Endothelial cell of umbilical vein (primary cell): ENCODE measurements at regions of chr19 and their contacts with region 1.

Region 1: DNA sequence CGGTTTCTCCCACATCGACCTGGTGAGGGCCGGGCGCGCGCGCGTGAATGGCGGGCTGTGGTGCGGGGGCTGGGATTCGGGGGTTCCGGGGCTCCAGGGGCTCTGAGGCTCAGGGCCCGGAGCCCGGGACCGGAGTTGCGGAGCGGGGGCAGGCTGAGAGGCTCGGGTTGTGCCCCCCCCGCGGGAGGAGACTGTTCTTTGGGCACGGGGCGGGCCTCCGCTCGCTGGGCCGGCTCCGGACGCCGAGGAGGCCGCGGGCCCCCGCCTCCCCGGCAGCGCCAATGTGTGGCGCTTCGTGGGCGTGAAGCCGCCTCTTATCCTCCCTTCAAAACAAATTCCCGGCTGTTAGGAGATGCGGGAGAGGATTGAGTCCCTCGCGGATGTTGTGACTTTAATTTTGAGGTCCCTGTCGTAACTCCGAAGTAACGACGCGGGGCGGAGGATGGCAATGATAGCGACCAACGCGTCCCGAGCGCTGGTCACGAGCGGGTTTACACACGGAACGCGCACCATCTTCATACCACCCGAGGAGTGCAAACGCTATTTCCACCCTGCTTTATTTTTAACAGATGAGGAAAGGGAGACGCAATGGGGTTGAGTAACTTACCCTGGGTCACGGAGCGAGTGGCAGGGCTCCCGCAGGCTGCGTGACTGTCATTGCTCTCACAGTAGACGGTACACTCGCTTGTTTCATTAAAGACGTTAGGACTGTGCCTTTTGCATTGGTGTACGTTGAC is 536 bp downstream of the UBA2 start:
- DNase-seq: peak; percentile 41
- H3K4me3 ChIP-seq: peak overlapping the region; percentile 85 to 93 (median 86)
- H3K27ac ChIP-seq: peak overlapping the region; percentile 59
- H3K4me1 ChIP-seq: peaks cover 27% of the 10 kb centered on the region
- H3K27me3 ChIP-seq: no peaks in the 10 kb centered on the region
- CTCF ChIP-seq: no peak
- POLR2A ChIP-seq: no peak

Region 2: DNA sequence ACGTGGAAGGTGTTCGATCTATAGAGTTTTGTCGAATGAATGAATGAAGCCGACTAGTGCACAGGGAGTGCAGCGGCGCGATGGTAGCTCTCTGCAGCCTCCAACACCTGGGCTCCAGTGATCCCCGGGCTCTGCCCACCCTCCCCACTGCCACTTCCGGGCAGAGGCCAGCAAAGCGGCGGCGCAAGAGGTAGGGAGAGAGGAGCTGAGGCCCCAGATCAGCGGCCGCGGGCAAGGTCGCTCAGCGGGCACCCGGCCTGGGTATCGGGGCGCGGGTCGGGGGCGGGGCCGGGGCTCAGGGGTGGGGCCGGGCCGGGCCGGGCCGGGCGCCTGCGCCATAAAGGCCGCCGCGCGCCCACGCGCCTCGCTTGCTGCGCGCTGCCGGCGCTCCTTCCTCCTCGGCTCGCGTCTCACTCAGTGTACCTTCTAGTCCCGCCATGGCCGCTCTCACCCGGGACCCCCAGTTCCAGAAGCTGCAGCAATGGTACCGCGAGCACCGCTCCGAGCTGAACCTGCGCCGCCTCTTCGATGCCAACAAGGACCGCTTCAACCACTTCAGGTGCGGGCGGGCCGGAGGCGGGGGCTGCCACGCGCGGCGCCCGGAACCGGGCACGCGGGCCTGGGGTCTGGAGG is 63.8 kb before region 1 on chr19 and contains the start of gene GPI:
- CTCF ChIA-PET with region 1: interaction called, 3 read pairs
- POLR2A ChIA-PET with region 1: no interaction called
- dilution Hi-C with region 1: no loop called
- intact Hi-C with region 1: loop called (anchors 5 kb)
- DNase-seq: peak; percentile 28
- H3K4me3 ChIP-seq: peak within 1 kb of the TSS; percentile 71 to 93 (median 72)
- H3K27ac ChIP-seq: peak within 1 kb of the TSS; percentile 32
- H3K4me1 ChIP-seq: peaks cover 11% of the 10 kb centered on the region
- H3K27me3 ChIP-seq: no peaks in the 10 kb centered on the region
- CTCF ChIP-seq: no peak
- POLR2A ChIP-seq: peak; percentile 64
- total RNA-seq, gene GPI: 245 and 273 TPM in 2 replicates

Region 3: DNA sequence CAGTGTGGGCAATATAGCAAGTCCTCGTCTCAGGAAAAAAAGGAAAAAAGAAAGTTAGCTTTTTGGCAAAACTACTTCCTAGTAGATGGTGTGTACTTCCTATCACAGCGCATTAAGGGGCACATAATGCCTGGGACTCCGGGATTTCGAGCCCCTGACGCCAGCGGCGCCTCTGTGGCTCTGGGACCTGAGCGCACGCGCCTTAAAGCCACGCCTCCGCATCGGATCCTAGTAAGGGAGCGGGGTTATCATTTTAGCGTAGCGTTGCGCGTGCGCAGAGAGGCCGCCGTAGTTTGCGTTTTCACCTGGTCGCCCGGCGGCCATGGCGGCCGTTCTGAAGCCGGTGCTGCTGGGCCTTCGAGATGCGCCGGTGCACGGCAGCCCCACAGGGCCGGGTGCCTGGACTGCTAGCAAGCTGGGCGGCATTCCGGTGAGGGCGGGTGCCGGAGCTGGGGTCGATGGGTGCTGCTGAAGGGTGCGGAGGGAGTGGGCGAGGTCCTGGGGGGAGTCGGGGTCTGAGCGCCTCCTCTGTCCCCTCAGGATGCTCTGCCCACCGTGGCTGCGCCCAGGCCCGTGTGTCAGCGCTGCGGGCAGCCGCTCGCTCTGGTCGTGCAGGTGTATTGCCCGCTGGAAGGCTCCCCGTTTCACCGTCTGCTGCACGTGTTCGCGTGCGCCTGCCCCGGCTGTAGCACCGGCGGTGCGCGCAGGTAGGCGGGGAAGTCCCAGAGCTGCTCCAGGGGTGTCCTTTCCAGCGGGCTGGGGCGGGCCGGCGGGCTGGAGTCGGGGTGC is 24.4 kb before region 1 on chr19 and contains the start of gene PDCD2L:
- CTCF ChIA-PET with region 1: interaction called, 4 read pairs
- POLR2A ChIA-PET with region 1: no interaction called
- dilution Hi-C with region 1: no loop called
- intact Hi-C with region 1: loop called (anchors 1 kb)
- DNase-seq: peak; percentile 92
- H3K4me3 ChIP-seq: peak within 1 kb of the TSS; percentile 60 to 79 (median 75)
- H3K27ac ChIP-seq: peak within 1 kb of the TSS; percentile 69
- H3K4me1 ChIP-seq: peaks cover 7% of the 10 kb centered on the region
- H3K27me3 ChIP-seq: no peaks in the 10 kb centered on the region
- CTCF ChIP-seq: no peak
- POLR2A ChIP-seq: peak; percentile 75
- total RNA-seq, gene PDCD2L: 12.4 and 12.9 TPM in 2 replicates

Region 4: DNA sequence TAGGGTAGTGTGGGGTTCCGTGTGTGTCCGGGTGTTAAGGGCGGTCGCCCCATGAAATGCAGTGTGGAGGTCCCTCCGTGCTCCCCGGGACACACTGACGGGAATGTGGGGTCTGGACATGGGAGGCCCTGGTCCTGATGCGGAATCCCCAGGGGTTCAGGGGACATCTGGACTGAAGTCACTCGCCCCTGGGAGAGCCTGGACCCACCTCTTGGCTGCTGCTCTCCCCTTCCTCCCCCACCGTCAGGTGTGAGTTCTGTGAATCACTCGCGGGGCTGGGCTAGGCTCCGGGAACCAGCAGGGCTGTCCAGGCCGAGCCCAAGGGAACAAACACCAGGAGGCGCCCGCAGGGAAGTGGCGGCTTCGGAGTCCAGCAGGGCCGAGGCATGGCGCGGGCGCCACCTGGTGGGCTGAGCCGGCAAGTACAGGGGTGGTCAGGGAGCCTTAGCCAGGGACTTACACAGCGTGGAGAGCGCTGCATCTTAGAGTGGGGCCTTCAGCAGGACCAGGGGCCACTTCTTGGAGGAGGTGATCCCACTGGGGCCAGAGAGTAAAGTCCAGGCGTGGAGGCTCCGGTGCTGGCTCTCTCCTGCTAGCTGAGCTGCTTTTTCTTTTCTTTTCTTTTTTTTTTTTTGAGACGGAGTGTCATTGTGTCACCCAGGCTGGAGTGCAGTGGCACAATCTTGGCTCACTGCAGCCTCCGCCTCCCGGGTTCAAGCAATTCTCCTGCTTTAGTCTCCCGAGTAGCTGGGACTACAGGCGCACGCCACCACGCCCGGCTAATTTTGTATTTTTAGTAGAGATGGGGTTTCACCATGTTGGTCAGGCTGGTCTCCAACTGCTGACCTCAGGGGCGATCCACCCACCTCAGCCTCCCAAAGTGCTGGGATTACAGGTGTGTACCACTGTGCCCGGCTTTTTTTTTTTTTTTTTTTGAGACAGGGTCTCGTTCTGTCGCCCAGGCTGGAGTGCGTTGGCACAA is 72.9 kb after region 1 on chr19:
- CTCF ChIA-PET with region 1: no interaction called
- POLR2A ChIA-PET with region 1: no interaction called
- dilution Hi-C with region 1: no loop called
- intact Hi-C with region 1: no loop called
- DNase-seq: peak; percentile 91
- H3K4me3 ChIP-seq: no peak overlapping the region
- H3K27ac ChIP-seq: no peak overlapping the region
- H3K4me1 ChIP-seq: no peaks in the 10 kb centered on the region
- H3K27me3 ChIP-seq: no peaks in the 10 kb centered on the region
- CTCF ChIP-seq: peak; percentile 100
- POLR2A ChIP-seq: no peak